ENCODE measurements at regions of chr11 and their contacts with region 1.

Region 1: GRCh38 chr11:47248664-47249377 is at the start of gene ACP2:
- DNase-seq: no peak
- H3K4me3 ChIP-seq: peak within 1 kb of the TSS; percentile 72
- CTCF ChIP-seq: peak; percentile 48

Region 2: DNA sequence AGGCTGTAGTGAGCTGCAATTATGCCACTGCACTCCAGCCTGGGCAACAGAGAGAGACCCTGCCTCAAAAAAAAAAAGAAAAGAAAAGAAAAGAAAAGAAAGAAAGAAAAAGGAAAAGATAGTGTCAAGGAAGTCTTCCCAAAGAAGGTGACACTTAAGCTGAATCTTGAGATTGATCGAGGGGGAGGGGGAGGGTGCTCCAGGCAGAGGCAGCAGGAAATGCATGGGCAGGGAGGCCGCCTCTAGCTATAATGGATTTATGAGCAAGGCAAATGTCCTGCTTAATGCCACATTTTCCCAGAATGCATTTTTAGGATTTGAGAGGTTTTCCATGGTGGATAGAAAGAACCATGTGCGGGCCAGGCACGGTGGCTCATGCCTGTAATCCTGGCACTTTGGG is 47.8 kb before region 1 on chr11:
- CTCF ChIA-PET with region 1: no interaction called
- POLR2A ChIA-PET with region 1: no interaction called
- DNase-seq: no peak
- H3K4me3 ChIP-seq: no peak overlapping the region
- CTCF ChIP-seq: no peak

Region 3: DNA sequence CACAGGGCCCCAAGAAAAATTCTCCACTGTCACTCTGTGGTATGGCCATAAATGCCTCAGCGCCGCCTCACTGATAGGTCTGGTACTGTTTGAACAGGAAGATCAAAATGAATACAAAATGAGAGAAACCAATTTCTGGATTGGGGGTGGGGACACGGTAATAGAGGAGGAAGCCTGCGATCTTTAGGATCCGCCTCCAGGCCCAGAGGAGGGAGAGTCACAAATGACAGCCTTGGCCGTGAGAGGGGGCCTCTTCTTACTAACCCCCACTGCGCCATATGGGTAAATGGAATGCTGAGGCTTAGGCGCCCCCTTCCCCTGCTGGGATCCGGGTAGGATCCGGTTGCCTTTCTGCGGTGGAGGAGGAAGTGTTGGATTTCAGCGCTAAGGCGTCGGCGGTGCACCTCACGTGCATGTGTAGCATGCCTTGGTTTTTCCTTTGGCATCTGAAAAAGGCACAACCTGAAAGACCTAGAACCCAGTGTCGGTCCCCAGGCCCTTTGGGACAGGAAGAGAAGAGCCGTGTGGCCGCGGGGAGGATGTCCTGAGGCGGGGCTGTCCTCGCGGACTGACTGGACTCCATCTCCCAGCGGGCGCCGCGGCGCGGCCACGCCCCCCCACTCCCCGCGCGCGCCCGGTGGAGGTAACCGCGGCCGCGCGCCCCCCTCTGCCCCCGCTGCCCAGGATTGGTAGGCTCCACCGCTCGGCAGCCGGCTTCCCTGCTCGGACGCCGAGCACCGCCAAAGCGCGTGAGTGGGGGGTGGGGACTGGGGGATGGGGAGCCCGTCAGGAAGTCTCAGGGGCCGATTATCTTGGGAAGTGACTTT is 20.4 kb after region 1 on chr11:
- CTCF ChIA-PET with region 1: interaction called, 12 read pairs
- POLR2A ChIA-PET with region 1: interaction called, 6 read pairs
- DNase-seq: peak; percentile 44
- H3K4me3 ChIP-seq: peak overlapping the region; percentile 75
- CTCF ChIP-seq: peak; percentile 11

Region 4: GRCh38 chr11:47426061-47426956 is 177.5 kb after region 1 on chr11 and contains the start of gene PSMC3:
- CTCF ChIA-PET with region 1: no interaction called
- POLR2A ChIA-PET with region 1: no interaction called
- DNase-seq: peak; percentile 56
- H3K4me3 ChIP-seq: peak within 1 kb of the TSS; percentile 98
- CTCF ChIP-seq: no peak

Measured in AG04449 (cell line).